ENCODE measurements at regions of chr5 and their contacts with region 1.

Region 1: GRCh38 chr5:151447174-151448037 is at the start of gene SLC36A1:
- DNase-seq: peak; percentile 88 to 99 (median 96)

Region 2: DNA sequence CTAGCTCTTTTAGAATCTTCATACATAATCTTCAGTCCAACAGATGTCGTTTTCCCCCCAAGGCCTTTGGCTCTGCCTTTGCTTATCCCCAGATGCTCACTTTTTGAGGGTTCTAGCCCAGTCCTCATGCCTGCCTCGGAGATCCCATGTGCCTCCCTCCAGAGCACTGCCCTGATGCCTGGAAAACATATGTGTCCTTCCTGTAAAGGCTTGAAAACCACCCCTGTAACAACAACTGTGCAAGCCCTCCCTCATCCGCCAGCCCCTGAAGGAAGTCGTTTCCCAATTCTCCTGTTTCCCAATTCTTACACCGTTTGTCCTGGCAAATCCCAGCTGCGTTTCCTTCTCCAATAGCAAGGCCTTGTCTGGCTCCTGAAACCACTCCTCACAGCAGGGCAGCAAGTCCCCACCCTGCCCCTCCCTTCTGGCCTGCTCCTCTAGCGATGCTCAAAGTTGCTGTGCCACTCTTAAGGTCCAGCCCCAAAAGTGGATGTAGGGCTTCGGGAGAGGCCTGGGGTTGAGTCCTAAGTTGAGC is 52.2 kb after region 1 on chr5:
- intact Hi-C with region 1: loop called (anchors 5 kb)
- DNase-seq: no peak

Region 3: GRCh38 chr5:151651997-151652645 is 204.7 kb after region 1 on chr5:
- intact Hi-C with region 1: loop called (anchors 5 kb)
- DNase-seq: peak; percentile 75 to 94 (median 86)

Region 4: DNA sequence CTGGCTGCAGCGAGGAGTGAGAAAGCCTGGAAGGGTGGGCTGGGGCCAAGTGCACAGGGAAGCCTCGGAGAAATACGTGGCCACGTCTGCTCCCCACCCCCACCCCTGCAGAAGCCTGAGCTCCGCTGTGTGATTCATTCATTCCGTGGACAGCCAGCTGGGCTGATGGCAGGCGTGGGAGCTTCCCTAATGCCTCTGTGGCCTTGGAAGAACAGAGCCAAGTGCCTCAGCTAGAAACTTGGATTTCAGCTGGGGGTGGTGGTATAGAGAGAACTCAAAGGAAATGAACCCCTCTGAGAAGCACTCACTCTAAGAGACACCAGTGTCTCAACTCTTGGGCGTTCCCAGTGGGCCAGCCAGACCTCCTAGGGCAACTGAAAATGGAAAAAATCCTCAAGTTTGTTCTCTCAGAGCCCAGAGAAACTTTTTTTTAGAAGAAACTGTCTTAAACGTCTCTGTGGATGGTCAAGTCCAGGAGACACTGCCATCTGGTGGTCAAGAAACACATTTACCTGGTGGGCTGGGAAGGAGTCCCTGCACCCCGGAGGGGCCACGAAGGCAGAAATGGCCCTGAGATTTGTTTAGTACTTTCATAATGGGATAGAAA is 293.0 kb after region 1 on chr5:
- intact Hi-C with region 1: loop called (anchors 10 kb)
- DNase-seq: peak in 38 of 42 donors; percentile 17 to 86 (median 62)

Measured in head of caudate nucleus (tissue), 42 donors.